Activated CD4-positive, alpha-beta T cell treated with anti-CD3 and anti-CD28 coated beads, Interleukin-2, amount 10 ng/mL, durations not matched to agents 7 days and 5 days (primary cell): ENCODE measurements at regions of chr19 and their contacts with region 1.

Region 1: DNA sequence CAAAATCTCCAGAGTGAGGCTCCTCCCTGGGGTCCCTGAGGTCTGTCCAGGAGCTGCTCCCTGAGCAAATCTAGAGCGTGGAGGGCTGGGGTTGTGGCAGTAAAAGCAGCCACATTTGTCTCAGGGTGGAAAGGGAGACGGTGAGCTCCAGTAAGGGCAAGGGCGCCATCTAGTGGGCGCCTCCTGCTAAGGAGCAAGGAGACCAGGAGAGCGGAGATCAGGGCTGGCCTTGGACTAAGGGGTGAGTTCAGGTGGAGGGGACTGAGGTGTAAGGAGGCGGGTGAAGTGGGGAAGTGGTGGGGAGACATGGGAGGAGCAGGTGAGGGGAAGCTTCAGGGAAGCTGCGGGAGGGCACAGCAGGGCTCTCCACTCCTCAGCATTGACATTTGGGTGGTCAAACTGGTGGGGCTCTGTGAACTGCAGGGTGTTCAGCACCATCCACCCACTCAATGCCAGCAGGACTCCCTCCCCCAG is 5.3 kb upstream of the CEACAM21 start:
- DNase-seq: peak; percentile 86
- H3K4me3 Mint-ChIP-seq: no peak overlapping the region
- H3K27ac Mint-ChIP-seq: no peak overlapping the region
- H3K4me1 Mint-ChIP-seq: peaks cover 23% of the 10 kb centered on the region
- H3K27me3 Mint-ChIP-seq: no peaks in the 10 kb centered on the region

Region 2: GRCh38 chr19:41492843-41493242 is 77.8 kb before region 1 on chr19:
- CTCF ChIA-PET with region 1: no interaction called
- POLR2A ChIA-PET with region 1: no interaction called
- DNase-seq: no peak
- H3K4me3 Mint-ChIP-seq: no peak overlapping the region
- H3K27ac Mint-ChIP-seq: no peak overlapping the region
- H3K4me1 Mint-ChIP-seq: no peaks in the 10 kb centered on the region
- H3K27me3 Mint-ChIP-seq: peaks cover 18% of the 10 kb centered on the region

Region 3: DNA sequence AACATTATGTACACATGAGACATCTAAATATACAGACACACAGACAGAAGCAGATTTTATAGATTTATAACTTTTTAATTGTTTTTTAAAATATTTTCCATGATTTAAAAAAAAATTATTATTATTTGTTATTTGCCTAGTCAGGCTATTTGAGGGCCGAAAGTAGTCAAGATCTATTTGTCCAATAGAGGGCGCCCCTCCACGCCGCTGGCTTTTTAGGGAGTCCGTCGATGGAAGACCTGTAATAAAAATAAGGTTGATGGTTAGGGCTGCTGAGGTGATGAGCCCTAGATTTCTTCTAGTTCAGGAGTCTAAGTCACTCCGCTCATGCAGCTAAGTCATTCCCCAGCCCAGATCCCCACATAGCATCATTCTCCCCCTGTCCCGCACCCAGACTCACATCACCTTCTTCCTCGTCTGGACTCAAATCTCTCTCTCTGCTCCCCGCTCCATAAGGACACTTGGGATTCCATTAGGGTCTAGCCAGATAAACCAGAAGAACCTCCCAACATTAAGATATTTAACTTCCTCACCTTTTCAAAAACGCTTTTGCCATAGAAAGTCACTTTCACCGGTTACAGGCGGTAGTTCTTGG is 28.6 kb before region 1 on chr19:
- CTCF ChIA-PET with region 1: interaction called, 14 read pairs
- POLR2A ChIA-PET with region 1: interaction called, 4 read pairs
- DNase-seq: peak; percentile 82
- H3K4me3 Mint-ChIP-seq: no peak overlapping the region
- H3K27ac Mint-ChIP-seq: peak overlapping the region; percentile 11
- H3K4me1 Mint-ChIP-seq: peaks cover 57% of the 10 kb centered on the region
- H3K27me3 Mint-ChIP-seq: no peaks in the 10 kb centered on the region

Region 4: DNA sequence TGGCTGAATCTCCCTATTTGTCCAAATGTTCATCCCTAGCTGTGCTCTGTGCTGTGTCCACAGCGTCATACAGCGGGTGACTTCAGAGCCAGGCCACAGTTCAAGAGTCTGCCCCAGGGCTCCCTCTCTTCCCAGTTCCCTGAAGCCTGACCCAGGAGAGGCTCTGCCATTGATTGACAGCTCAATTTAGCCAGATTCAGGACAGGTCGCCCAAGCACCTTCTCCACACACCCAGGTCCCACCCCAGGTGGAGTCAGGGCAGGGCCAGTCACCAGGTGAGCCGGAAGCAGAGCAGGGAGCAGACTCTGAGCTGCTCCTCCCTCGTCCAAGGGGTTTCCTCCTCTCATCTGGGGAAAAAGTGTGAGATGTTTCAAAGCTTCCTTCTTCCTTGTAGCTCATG is 111.7 kb after region 1 on chr19:
- CTCF ChIA-PET with region 1: no interaction called
- POLR2A ChIA-PET with region 1: no interaction called
- DNase-seq: no peak
- H3K4me3 Mint-ChIP-seq: no peak overlapping the region
- H3K27ac Mint-ChIP-seq: no peak overlapping the region
- H3K4me1 Mint-ChIP-seq: no peaks in the 10 kb centered on the region
- H3K27me3 Mint-ChIP-seq: peaks cover 28% of the 10 kb centered on the region